ENCODE measurements at regions of chr18 and their contacts with region 1.

Region 1: DNA sequence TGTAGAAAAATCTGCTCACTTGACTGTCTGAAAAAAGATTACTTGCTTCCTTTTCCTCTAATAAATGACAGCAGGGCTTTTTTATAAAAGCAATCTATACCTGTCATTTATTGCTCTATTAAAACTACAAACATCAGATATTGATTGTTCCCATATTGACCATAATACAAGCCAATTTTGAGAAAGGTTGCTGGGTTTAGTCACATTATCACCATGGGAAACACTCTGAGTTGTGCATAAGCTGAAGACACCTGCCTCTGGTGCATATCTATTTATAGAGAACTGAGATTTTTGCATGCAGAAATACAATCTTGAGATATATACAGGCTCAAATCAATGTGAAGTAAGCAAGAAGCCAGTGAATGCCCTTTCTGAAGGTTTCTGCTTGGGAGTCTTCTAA is 853.9 kb downstream of the DCC start:
- H3K4me3 ChIP-seq: no peak overlapping the region
- H3K27ac ChIP-seq: no peak overlapping the region
- H3K4me1 ChIP-seq: no peaks in the 10 kb centered on the region
- CTCF ChIP-seq: no peak

Region 2: GRCh38 chr18:52715421-52715820 is 478.4 kb before region 1 on chr18:
- CTCF ChIA-PET with region 1: no interaction called
- POLR2A ChIA-PET with region 1: no interaction called
- H3K4me3 ChIP-seq: no peak overlapping the region
- H3K27ac ChIP-seq: no peak overlapping the region
- H3K4me1 ChIP-seq: no peaks in the 10 kb centered on the region
- CTCF ChIP-seq: no peak

Region 3: DNA sequence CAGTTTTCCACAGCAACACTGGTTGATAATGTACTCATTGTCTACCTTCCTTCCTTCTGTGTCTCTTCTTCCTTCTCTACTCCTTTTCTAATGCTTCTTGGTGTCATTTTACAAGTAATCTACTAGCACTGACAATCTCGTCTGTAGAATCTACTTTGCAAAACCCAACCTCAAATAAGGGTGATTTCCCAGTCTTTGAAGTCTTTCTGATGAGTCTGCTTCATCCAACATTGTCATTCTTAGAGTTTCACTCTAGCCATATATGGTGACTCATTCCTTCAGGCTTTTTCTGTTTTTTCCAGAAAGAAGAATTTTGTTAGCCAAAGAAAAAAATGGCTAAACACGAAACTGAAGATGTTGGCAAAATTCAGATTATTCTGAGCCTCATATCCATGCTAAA is 741.9 kb after region 1 on chr18:
- CTCF ChIA-PET with region 1: no interaction called
- POLR2A ChIA-PET with region 1: interaction called, 10 read pairs
- H3K4me3 ChIP-seq: no peak overlapping the region
- H3K27ac ChIP-seq: no peak overlapping the region
- H3K4me1 ChIP-seq: no peaks in the 10 kb centered on the region
- CTCF ChIP-seq: no peak

Measured in HEK293 (cell line).